ENCODE measurements at regions of chr18 and their contacts with region 1.

Region 1: GRCh38 chr18:77132371-77133050 is at the start of gene MBP:
- DNase-seq: peak; percentile 80
- ATAC-seq: peak; percentile 70
- H3K4me3 Mint-ChIP-seq: peak within 1 kb of the TSS; percentile 92
- H3K27ac Mint-ChIP-seq: peak within 1 kb of the TSS; percentile 95
- H3K4me1 Mint-ChIP-seq: peaks cover 68% of the 10 kb centered on the region
- H3K27me3 Mint-ChIP-seq: no peaks in the 10 kb centered on the region
- total RNA-seq, gene MBP: 94.7 to 101 TPM

Region 2: GRCh38 chr18:77054606-77055428 is 77.7 kb before region 1 on chr18:
- CTCF ChIA-PET with region 1: interaction called, 13 read pairs
- DNase-seq: peak; percentile 95
- ATAC-seq: peak; percentile 88
- H3K4me3 Mint-ChIP-seq: peak overlapping the region; percentile 72
- H3K27ac Mint-ChIP-seq: peak overlapping the region; percentile 91
- H3K4me1 Mint-ChIP-seq: peaks cover 64% of the 10 kb centered on the region
- H3K27me3 Mint-ChIP-seq: no peaks in the 10 kb centered on the region

Region 3: GRCh38 chr18:77061946-77062517 is 70.5 kb before region 1 on chr18:
- CTCF ChIA-PET with region 1: interaction called, 12 read pairs
- DNase-seq: peak; percentile 66
- ATAC-seq: peak; percentile 18
- H3K4me3 Mint-ChIP-seq: peak overlapping the region; percentile 74
- H3K27ac Mint-ChIP-seq: peak overlapping the region; percentile 100
- H3K4me1 Mint-ChIP-seq: peaks cover 86% of the 10 kb centered on the region
- H3K27me3 Mint-ChIP-seq: no peaks in the 10 kb centered on the region

Region 4: DNA sequence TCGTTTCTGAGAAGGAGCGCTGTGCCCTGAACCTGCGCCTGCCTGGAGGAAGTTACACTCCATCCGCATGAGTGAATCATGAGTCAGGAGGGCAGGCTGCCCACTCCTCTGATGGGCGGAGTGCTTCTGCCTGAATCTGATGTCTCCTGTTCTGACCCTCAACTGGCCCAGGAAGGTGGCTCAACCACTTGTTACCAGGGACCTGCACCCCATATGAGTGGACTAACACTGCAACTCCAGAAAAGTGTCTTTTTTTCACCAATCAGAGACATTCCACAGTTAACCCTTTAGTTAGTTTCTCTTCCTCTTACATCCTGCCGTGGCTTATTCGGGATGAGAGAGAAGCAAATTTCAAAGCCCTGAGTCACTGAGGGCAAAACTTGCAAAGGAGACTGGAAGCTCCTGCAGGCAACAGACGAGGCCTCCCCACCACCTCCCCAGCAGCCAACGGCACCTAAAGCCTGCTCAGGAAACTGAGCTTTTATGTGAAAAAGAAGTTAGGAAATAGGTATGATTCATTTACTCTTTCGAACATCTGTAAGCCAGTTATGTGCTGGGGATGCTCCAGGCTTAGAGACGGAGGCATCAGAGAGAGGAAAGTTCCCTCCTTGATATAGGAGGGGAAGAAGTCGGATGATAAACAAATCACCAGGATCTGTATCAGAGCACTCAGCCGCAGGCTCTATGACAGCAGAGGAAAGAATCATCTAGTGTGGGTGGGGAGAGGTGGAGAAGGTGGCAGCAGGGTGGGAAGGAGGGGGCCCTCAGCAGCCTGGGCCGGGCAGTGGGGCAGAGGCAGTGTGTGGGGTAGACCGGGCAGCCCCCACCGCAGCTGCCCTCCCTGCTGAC is 30.9 kb before region 1 on chr18:
- CTCF ChIA-PET with region 1: interaction called, 12 read pairs
- DNase-seq: peak; percentile 74
- ATAC-seq: peak; percentile 45
- H3K4me3 Mint-ChIP-seq: peak overlapping the region; percentile 70
- H3K27ac Mint-ChIP-seq: peak overlapping the region; percentile 98
- H3K4me1 Mint-ChIP-seq: peaks cover 95% of the 10 kb centered on the region
- H3K27me3 Mint-ChIP-seq: no peaks in the 10 kb centered on the region

Region 5: GRCh38 chr18:77207540-77207939 is 75.0 kb after region 1 on chr18:
- CTCF ChIA-PET with region 1: interaction called, 10 read pairs
- DNase-seq: peak; percentile 56
- ATAC-seq: peak; percentile 50
- H3K4me3 Mint-ChIP-seq: no peak overlapping the region
- H3K27ac Mint-ChIP-seq: no peak overlapping the region
- H3K4me1 Mint-ChIP-seq: peaks cover 47% of the 10 kb centered on the region
- H3K27me3 Mint-ChIP-seq: no peaks in the 10 kb centered on the region

Region 6: DNA sequence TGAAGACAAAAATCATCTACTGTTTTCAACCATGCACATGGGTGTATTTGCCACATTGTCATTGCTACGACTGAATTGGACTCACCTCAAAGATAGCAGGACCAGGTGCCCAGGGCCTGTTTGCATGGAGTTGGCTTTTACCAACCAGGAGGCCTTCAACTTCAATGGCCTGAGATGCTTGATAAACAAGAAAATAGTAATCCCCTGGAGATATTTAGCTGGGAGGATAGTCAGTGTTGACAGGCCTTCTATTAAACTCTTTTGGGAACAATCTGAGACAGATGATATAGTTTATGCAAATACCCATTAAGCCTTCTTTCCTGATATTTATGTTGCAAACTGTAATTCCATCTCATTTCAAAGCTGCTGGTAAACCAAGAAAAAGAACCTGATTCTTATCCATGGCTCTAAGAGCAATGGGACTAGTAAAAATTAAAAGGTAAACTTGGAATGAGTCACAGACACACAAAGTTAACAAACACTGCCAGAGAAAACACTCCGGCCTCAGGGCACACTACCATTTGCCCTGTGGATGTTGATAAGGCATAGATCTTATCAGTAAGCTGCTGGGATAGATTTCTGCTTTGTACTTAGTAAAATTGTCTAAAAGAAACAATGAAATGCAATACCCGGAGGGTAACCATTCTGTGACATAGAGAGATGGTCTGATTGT is 130.1 kb after region 1 on chr18:
- CTCF ChIA-PET with region 1: no interaction called
- DNase-seq: no peak
- ATAC-seq: no peak
- H3K4me3 Mint-ChIP-seq: no peak overlapping the region
- H3K27ac Mint-ChIP-seq: no peak overlapping the region
- H3K4me1 Mint-ChIP-seq: no peaks in the 10 kb centered on the region
- H3K27me3 Mint-ChIP-seq: peaks cover 3% of the 10 kb centered on the region

Measured in activated CD8-positive, alpha-beta memory T cell treated with anti-CD3 and anti-CD28 coated beads, Interleukin-2, amount 10 ng/mL, durations not matched to agents 7 days and 5 days (primary cell).